ENCODE measurements at regions of chr2 and their contacts with region 1.

Region 1: DNA sequence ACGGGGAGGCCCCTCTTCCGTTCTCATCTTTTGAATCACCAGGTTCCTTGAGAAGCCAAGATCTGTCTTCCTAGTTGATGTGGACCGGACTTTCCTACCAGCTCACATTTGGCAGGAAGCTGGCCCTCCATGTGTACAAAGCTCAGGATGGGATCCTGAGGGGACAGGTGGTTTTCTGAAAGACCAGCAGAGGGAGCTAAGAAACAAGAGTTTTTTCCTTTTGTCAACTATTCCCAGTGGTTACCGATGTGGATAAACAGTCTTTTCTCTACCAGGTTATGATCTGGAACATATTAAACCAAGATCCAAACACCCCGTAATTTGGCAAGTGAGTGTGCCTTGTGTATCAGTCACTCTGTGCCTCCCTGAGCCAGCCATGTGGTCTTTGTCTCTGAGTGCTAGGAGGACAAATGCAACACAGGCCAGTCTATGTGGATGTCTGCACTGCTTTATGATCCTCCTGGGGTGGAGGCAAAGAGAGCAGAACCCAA is 25.1 kb upstream of the ARHGAP25 start:
- DNase-seq: peak in 3 of 5 donors; percentile 29 to 47 (median 40)
- H3K4me3 ChIP-seq: no peak overlapping the region
- H3K4me3 Mint-ChIP-seq: peak overlapping the region in 3 of 8 donors; percentile 27 to 67 (median 30)
- H3K27ac ChIP-seq: peak overlapping the region; percentile 24
- H3K27ac Mint-ChIP-seq: peak overlapping the region; percentile 60 to 82 (median 68)
- H3K4me1 ChIP-seq: peaks cover 10% of the 10 kb centered on the region
- H3K4me1 Mint-ChIP-seq: peaks cover 13 to 37% (median 20%) of the 10 kb centered on the region in 4 donors
- H3K27me3 ChIP-seq: no peaks in the 10 kb centered on the region
- H3K27me3 Mint-ChIP-seq: no peaks in the 10 kb centered on the region

Region 2: DNA sequence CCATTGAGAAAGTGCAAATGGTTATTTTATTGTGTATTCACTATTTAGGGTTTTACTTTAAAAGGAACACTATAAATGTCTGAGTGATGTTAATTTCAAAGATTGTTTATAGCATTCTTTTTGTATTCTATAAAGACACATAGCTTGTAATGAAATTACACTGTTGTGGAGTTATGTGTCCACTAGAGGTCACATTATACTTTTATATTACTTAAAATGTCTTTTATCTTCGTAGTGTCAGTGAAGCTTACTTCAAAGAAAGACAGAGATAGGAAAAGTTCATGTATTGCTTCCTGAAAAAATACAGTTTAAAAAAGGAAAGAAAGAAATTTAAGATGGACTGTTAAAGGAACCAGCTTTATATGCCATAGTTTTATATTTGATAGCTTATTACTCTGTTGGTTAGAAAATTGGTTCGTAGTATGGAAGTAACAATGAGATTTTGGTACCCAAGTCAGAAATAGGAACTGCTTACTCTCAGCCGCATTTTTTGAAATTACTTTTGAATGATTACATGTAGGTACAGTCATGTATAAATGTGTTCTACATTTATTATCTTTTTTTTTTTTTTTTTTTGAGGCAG is 221.6 kb before region 1 on chr2:
- CTCF ChIA-PET with region 1: interaction called, 34 read pairs
- POLR2A ChIA-PET with region 1: interaction called, 3 read pairs
- intact Hi-C with region 1: loop called (anchors 5 kb)
- DNase-seq: peak in 4 of 5 donors; percentile 24 to 39 (median 31)
- H3K4me3 ChIP-seq: no peak overlapping the region
- H3K4me3 Mint-ChIP-seq: peak overlapping the region in 1 of 8 donors; percentile 28
- H3K27ac ChIP-seq: no peak overlapping the region
- H3K27ac Mint-ChIP-seq: peak overlapping the region in 2 of 7 donors; percentile 35 to 38
- H3K4me1 ChIP-seq: no peaks in the 10 kb centered on the region
- H3K4me1 Mint-ChIP-seq: peaks cover 0 to 5% (median 1%) of the 10 kb centered on the region in 4 donors
- H3K27me3 ChIP-seq: no peaks in the 10 kb centered on the region
- H3K27me3 Mint-ChIP-seq: no peaks in the 10 kb centered on the region

Region 3: GRCh38 chr2:68662466-68662865 is 47.0 kb before region 1 on chr2:
- CTCF ChIA-PET with region 1: no interaction called
- POLR2A ChIA-PET with region 1: no interaction called
- intact Hi-C with region 1: no loop called
- DNase-seq: no peak
- H3K4me3 ChIP-seq: no peak overlapping the region
- H3K4me3 Mint-ChIP-seq: no peak overlapping the region
- H3K27ac ChIP-seq: no peak overlapping the region
- H3K27ac Mint-ChIP-seq: no peak overlapping the region
- H3K4me1 ChIP-seq: no peaks in the 10 kb centered on the region
- H3K4me1 Mint-ChIP-seq: no peaks in the 10 kb centered on the region
- H3K27me3 ChIP-seq: no peaks in the 10 kb centered on the region
- H3K27me3 Mint-ChIP-seq: peaks cover 15 to 23% of the 10 kb centered on the region in 2 donors

Region 4: DNA sequence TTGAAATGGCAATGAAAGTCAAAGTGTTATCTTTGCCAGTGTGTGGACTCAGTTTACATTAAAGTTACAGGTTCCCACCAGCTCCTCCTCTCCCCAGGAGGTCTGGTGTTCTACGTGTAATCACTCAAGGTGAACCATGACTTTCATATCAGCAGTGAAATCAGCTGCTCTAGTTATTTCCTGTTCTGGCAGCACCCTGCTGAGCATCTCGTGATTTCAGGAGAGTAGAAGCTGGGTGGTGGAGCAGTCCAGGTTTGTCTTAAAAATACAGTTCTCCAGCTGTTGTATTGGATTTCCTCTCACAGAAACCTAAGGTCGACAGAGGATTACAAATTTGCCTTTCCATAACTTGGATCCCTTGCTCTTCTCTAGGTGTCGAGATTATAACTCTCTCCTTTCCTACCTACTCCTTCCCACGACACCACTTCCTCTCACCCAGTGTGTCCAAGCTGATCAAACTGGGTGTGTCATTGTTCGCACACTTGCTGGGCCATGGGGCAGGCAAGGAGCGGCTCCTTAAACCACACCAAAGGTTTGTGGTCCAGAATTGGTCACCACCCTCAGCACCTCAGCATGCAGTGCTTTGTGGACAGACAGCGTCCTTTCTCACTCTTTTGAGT is 12.1 kb after region 1 on chr2:
- CTCF ChIA-PET with region 1: interaction called, 92 read pairs
- POLR2A ChIA-PET with region 1: interaction called, 4 read pairs
- intact Hi-C with region 1: no loop called
- DNase-seq: peak; percentile 64 to 78 (median 70)
- H3K4me3 ChIP-seq: peak overlapping the region in 1 of 2 donors; percentile 6
- H3K4me3 Mint-ChIP-seq: peak overlapping the region; percentile 63 to 89 (median 83)
- H3K27ac ChIP-seq: peak overlapping the region; percentile 54
- H3K27ac Mint-ChIP-seq: peak overlapping the region; percentile 91 to 98 (median 96)
- H3K4me1 ChIP-seq: peaks cover 96% of the 10 kb centered on the region
- H3K4me1 Mint-ChIP-seq: peaks cover 75 to 99% (median 90%) of the 10 kb centered on the region in 4 donors
- H3K27me3 ChIP-seq: no peaks in the 10 kb centered on the region
- H3K27me3 Mint-ChIP-seq: no peaks in the 10 kb centered on the region

Region 5: DNA sequence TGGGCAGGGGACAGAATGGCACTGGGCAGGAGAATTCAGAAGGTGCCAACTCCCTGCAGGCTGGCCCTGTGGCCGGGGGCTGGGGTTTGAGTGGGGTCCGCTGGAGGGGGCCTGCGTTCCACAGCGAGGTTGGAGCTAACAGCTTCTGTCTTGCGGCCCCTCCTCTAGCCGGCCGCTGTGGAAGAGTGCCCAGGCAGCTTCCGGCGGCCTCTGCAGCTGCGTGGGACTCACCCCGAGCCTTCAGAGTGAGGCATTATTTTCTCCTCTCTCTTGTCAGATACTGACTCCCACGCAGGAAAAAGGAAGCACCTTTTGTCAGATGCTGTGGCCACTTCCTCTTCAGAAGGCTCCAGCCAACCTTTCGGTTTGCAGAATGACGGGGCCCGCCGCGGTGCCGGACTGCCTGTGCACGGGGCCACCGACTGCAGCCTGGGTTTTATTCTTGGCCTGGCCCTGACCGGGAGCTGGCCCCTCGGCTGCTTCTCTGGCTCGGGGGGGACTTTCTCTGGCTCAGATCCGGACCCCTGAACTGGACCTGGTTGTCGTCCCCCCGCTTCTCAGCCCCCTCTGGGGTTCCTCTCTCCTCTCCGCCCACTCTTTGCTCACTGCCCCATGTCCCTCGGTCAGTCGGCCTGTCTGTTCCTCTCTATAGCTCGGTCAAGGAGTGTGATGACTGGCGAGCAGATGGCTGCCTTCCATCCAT is 65.3 kb after region 1 on chr2:
- CTCF ChIA-PET with region 1: interaction called, 11 read pairs
- POLR2A ChIA-PET with region 1: no interaction called
- intact Hi-C with region 1: no loop called
- DNase-seq: peak; percentile 47 to 79 (median 51)
- H3K4me3 ChIP-seq: peak overlapping the region; percentile 57 to 63
- H3K4me3 Mint-ChIP-seq: peak overlapping the region; percentile 84 to 95 (median 87)
- H3K27ac ChIP-seq: peak overlapping the region; percentile 84
- H3K27ac Mint-ChIP-seq: peak overlapping the region; percentile 95 to 99 (median 97)
- H3K4me1 ChIP-seq: peaks cover 97% of the 10 kb centered on the region
- H3K4me1 Mint-ChIP-seq: peaks cover 78 to 90% (median 86%) of the 10 kb centered on the region in 4 donors
- H3K27me3 ChIP-seq: no peaks in the 10 kb centered on the region
- H3K27me3 Mint-ChIP-seq: no peaks in the 10 kb centered on the region

Region 6: GRCh38 chr2:68837164-68837860 is 127.8 kb after region 1 on chr2:
- CTCF ChIA-PET with region 1: interaction called, 106 read pairs
- POLR2A ChIA-PET with region 1: interaction called, 4 read pairs
- intact Hi-C with region 1: loop called (anchors 1 kb)
- DNase-seq: peak; percentile 50 to 62 (median 54)
- H3K4me3 ChIP-seq: no peak overlapping the region
- H3K4me3 Mint-ChIP-seq: peak overlapping the region in 2 of 8 donors; percentile 24 to 38
- H3K27ac ChIP-seq: no peak overlapping the region
- H3K27ac Mint-ChIP-seq: peak overlapping the region in 3 of 7 donors; percentile 47 to 66 (median 60)
- H3K4me1 ChIP-seq: peaks cover 26% of the 10 kb centered on the region
- H3K4me1 Mint-ChIP-seq: peaks cover 19 to 44% (median 31%) of the 10 kb centered on the region in 4 donors
- H3K27me3 ChIP-seq: no peaks in the 10 kb centered on the region
- H3K27me3 Mint-ChIP-seq: no peaks in the 10 kb centered on the region

Region 7: DNA sequence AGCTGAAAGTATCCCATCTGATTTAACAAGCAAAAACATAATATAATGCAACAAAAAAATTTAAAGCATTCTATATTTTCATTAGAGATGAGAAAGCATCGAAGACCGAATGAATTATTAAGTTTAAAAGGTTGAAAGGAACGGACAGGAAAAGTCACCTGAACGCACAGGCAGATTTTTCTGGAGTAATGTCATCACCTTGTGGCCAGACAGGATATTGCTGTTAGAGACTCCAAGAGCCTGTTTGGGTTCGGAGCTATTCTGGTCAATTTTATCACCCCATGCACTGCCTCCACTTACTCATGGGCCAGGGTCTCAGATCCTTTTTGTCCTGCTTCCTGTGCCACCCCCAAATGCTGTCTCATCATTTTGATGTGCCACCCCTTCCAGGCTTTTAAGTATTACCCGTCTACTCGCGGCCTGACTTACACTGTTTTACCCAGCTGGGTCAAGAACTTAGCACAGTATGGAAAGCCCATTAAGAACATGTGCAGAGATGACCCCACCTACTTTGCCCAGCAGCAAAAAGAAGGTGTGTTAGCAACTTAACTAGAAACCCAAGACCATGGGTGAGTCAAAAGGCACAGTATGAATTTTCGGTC is 215.9 kb after region 1 on chr2:
- CTCF ChIA-PET with region 1: interaction called, 152 read pairs
- POLR2A ChIA-PET with region 1: interaction called, 8 read pairs
- intact Hi-C with region 1: loop called (anchors 1 kb)
- DNase-seq: peak; percentile 57 to 73 (median 66)
- H3K4me3 ChIP-seq: no peak overlapping the region
- H3K4me3 Mint-ChIP-seq: peak overlapping the region in 1 of 8 donors; percentile 17
- H3K27ac ChIP-seq: no peak overlapping the region
- H3K27ac Mint-ChIP-seq: peak overlapping the region in 3 of 7 donors; percentile 17 to 43 (median 24)
- H3K4me1 ChIP-seq: peaks cover 4% of the 10 kb centered on the region
- H3K4me1 Mint-ChIP-seq: peaks cover 0 to 4% (median 2%) of the 10 kb centered on the region in 4 donors
- H3K27me3 ChIP-seq: no peaks in the 10 kb centered on the region
- H3K27me3 Mint-ChIP-seq: peaks cover 5 to 6% of the 10 kb centered on the region in 2 donors

Measured in CD4-positive, alpha-beta memory T cell (primary cell).